CD4-positive, alpha-beta T cell (primary cell): ENCODE measurements at regions of chr5 and their contacts with region 1.

Region 1: GRCh38 chr5:139403787-139404483 is at the start of gene SPATA24:
- DNase-seq: peak; percentile 95 to 99 (median 98)
- ATAC-seq: peak; percentile 85
- H3K4me3 ChIP-seq: peak within 1 kb of the TSS; percentile 71
- H3K4me3 Mint-ChIP-seq: peak within 1 kb of the TSS; percentile 92
- H3K27ac ChIP-seq: peak within 1 kb of the TSS; percentile 74 to 97
- H3K27ac Mint-ChIP-seq: peak within 1 kb of the TSS; percentile 94
- H3K4me1 ChIP-seq: peaks cover 21% of the 10 kb centered on the region
- H3K4me1 Mint-ChIP-seq: peaks cover 35% of the 10 kb centered on the region
- H3K27me3 ChIP-seq: no peaks in the 10 kb centered on the region
- H3K27me3 Mint-ChIP-seq: no peaks in the 10 kb centered on the region
- CTCF ChIP-seq: no peak
- total RNA-seq, gene SPATA24: 3.0 to 3.9 TPM

Region 2: GRCh38 chr5:138464008-138464387 is 939.9 kb before region 1 on chr5:
- CTCF ChIA-PET with region 1: no interaction called
- POLR2A ChIA-PET with region 1: no interaction called
- intact Hi-C with region 1: loop called in 1 of 2 experiments (anchors 10 kb)
- DNase-seq: peak; percentile 85 to 98 (median 93)
- ATAC-seq: peak; percentile 51
- H3K4me3 ChIP-seq: peak overlapping the region; percentile 60
- H3K4me3 Mint-ChIP-seq: peak overlapping the region; percentile 96
- H3K27ac ChIP-seq: peak overlapping the region; percentile 89 to 94
- H3K27ac Mint-ChIP-seq: peak overlapping the region; percentile 93
- H3K4me1 ChIP-seq: peaks cover 60% of the 10 kb centered on the region
- H3K4me1 Mint-ChIP-seq: peaks cover 50% of the 10 kb centered on the region
- H3K27me3 ChIP-seq: no peaks in the 10 kb centered on the region
- H3K27me3 Mint-ChIP-seq: no peaks in the 10 kb centered on the region
- CTCF ChIP-seq: peak; percentile 85

Region 3: DNA sequence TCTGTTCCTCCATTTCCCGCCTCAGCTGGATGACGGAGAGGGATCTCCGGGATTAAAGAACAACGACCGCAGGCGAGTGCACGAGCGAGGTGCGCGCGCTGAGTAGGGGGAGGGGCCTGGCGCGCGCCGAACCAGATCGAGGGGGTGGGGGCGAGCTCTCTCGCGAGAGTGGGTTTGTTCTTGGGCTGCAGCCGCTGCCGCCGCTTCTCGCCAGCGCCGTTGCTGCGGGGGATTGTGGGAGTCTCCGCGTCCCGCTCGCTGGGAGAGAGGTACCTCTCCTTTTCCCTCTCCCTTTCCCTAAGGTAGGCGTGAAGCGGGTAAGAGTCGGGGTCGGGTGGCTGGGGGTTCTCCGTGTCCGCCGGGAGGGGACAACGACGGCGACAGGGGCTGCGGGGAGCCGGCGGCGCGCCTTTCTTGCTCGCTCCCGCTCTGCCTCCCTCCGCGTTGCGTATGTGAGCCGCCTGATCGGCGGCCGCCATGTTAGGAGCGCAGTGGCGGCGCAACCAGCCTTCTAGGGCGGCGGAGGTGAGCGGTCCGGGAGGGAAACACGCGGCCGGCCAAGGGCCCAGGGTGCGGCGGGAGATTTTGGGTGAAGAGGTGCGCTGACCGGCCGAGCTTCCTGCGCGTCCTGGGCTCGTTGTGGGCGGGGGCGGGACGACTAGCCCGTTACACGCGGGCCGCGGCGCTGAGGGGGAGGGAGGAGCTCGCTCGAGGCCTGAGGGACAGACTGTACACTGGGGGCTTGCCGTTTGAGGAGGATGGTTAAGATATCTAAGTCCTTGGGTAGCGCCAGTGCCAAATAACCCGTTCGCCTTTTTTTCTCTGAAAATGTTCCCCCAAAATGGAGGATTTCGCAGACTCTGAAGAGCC is 110.2 kb before region 1 on chr5 and contains the start of gene MATR3:
- CTCF ChIA-PET with region 1: no interaction called
- POLR2A ChIA-PET with region 1: interaction called, 27 read pairs
- intact Hi-C with region 1: no loop called
- DNase-seq: peak; percentile 88 to 96 (median 92)
- ATAC-seq: peak; percentile 89
- H3K4me3 ChIP-seq: peak within 1 kb of the TSS; percentile 95
- H3K4me3 Mint-ChIP-seq: peak within 1 kb of the TSS; percentile 99
- H3K27ac ChIP-seq: peak within 1 kb of the TSS; percentile 98 to 100
- H3K27ac Mint-ChIP-seq: peak within 1 kb of the TSS; percentile 99
- H3K4me1 ChIP-seq: peaks cover 27% of the 10 kb centered on the region
- H3K4me1 Mint-ChIP-seq: peaks cover 52% of the 10 kb centered on the region
- H3K27me3 ChIP-seq: no peaks in the 10 kb centered on the region
- H3K27me3 Mint-ChIP-seq: no peaks in the 10 kb centered on the region
- CTCF ChIP-seq: no peak
- total RNA-seq, gene MATR3: 376 to 401 TPM

Region 4: DNA sequence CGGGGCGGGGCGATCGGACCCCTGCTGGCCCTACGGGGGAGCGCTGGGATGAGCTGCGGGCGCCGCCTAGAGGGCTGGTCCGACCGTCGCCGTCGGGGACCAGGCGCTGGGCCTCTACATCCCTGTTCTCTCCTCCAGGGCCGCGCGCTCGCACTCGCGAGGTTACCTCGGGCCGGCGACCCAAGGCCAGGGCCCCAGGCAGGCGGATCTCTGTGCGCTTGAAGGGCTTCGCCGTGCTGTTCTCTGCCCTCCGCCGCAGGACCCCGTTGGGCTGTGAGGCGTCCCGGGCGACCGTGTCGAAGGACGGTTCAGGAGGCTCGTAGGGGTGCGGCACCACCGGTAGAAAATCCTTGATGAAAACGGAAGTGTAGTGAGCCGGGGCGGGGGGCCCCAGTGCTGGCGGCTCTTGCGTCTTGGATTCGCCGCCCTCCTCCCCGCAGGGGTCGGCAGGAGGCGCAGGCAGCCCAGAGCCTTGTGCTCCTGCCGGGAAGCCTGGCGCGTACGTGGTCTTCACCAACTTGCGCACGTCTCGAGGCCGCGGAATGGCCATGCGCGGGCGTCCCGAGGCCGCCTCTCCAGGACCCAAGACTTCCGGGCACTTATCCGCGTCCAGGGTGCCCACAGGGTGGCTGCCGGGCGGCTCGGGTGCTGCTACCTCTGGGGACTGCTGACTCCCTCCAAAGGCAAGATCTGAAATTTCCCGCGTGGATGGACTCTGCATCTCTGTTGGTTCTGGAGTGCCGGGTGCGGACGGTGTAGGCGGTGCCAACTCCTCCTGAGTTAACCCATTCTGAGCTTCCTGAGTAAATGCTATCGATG is 11.0 kb before region 1 on chr5:
- CTCF ChIA-PET with region 1: interaction called, 14 read pairs
- POLR2A ChIA-PET with region 1: interaction called, 18 read pairs
- intact Hi-C with region 1: no loop called
- DNase-seq: peak; percentile 51 to 89 (median 64)
- ATAC-seq: peak; percentile 66
- H3K4me3 ChIP-seq: peak overlapping the region; percentile 81
- H3K4me3 Mint-ChIP-seq: peak overlapping the region; percentile 92
- H3K27ac ChIP-seq: no peak overlapping the region
- H3K27ac Mint-ChIP-seq: peak overlapping the region; percentile 59
- H3K4me1 ChIP-seq: peaks cover 61% of the 10 kb centered on the region
- H3K4me1 Mint-ChIP-seq: peaks cover 38% of the 10 kb centered on the region
- H3K27me3 ChIP-seq: peaks cover 0 to 6% of the 10 kb centered on the region in 2 experiments
- H3K27me3 Mint-ChIP-seq: no peaks in the 10 kb centered on the region
- CTCF ChIP-seq: peak; percentile 66

Region 5: GRCh38 chr5:139482050-139482889 is 78.3 kb after region 1 on chr5 and contains the start of gene STING1:
- CTCF ChIA-PET with region 1: no interaction called
- POLR2A ChIA-PET with region 1: interaction called, 13 read pairs
- intact Hi-C with region 1: no loop called
- DNase-seq: peak; percentile 40 to 88 (median 60)
- ATAC-seq: peak; percentile 71
- H3K4me3 ChIP-seq: peak within 1 kb of the TSS; percentile 81
- H3K4me3 Mint-ChIP-seq: peak within 1 kb of the TSS; percentile 91
- H3K27ac ChIP-seq: peak within 1 kb of the TSS; percentile 82
- H3K27ac Mint-ChIP-seq: peak within 1 kb of the TSS; percentile 92
- H3K4me1 ChIP-seq: peaks cover 57% of the 10 kb centered on the region
- H3K4me1 Mint-ChIP-seq: peaks cover 37% of the 10 kb centered on the region
- H3K27me3 ChIP-seq: no peaks in the 10 kb centered on the region
- H3K27me3 Mint-ChIP-seq: no peaks in the 10 kb centered on the region
- CTCF ChIP-seq: no peak
- total RNA-seq, gene STING1: 155 to 168 TPM

Region 6: GRCh38 chr5:139765409-139766217 is 361.7 kb after region 1 on chr5:
- CTCF ChIA-PET with region 1: no interaction called
- POLR2A ChIA-PET with region 1: no interaction called
- intact Hi-C with region 1: loop called in 1 of 2 experiments (anchors 5 kb)
- DNase-seq: peak; percentile 71 to 92 (median 78)
- ATAC-seq: peak; percentile 92
- H3K4me3 ChIP-seq: peak overlapping the region; percentile 60
- H3K4me3 Mint-ChIP-seq: peak overlapping the region; percentile 48
- H3K27ac ChIP-seq: no peak overlapping the region
- H3K27ac Mint-ChIP-seq: no peak overlapping the region
- H3K4me1 ChIP-seq: peaks cover 19% of the 10 kb centered on the region
- H3K4me1 Mint-ChIP-seq: peaks cover 9% of the 10 kb centered on the region
- H3K27me3 ChIP-seq: peaks cover 29 to 30% of the 10 kb centered on the region in 2 experiments
- H3K27me3 Mint-ChIP-seq: peaks cover 50% of the 10 kb centered on the region
- CTCF ChIP-seq: peak; percentile 100

Region 7: GRCh38 chr5:140174465-140175366 is 770.8 kb after region 1 on chr5 and contains the start of gene CYSTM1:
- CTCF ChIA-PET with region 1: no interaction called
- POLR2A ChIA-PET with region 1: no interaction called
- intact Hi-C with region 1: loop called in 1 of 2 experiments (anchors 10 kb)
- DNase-seq: peak; percentile 90 to 99 (median 94)
- ATAC-seq: peak; percentile 91
- H3K4me3 ChIP-seq: peak within 1 kb of the TSS; percentile 66
- H3K4me3 Mint-ChIP-seq: peak within 1 kb of the TSS; percentile 95
- H3K27ac ChIP-seq: peak within 1 kb of the TSS; percentile 68 to 82
- H3K27ac Mint-ChIP-seq: peak within 1 kb of the TSS; percentile 96
- H3K4me1 ChIP-seq: peaks cover 17% of the 10 kb centered on the region
- H3K4me1 Mint-ChIP-seq: peaks cover 16% of the 10 kb centered on the region
- H3K27me3 ChIP-seq: no peaks in the 10 kb centered on the region
- H3K27me3 Mint-ChIP-seq: peaks cover 5% of the 10 kb centered on the region
- CTCF ChIP-seq: no peak
- total RNA-seq, gene CYSTM1: 7.2 to 7.4 TPM